BJ (cell line): ENCODE measurements at regions of chr9 and their contacts with region 1.

Region 1: DNA sequence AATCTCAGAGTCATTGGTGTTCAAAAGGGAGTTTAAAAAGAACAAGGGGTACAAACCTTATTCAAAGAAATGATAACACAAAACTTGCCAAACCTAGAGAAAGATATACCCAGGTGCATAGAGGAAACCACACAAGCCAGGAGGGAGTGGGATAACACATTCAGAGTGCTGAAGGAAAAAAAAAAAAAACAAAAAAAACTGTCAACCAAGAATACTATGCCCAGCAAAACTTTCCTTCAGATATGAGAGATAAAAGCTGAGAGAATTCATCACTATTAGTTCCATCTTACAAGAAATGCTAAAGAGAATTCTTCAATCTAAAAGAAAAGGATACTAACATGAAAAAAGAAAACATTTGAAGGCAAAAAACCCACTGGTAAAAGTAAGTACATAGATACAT is 11.5 kb upstream of the TESK1 start:
- DNase-seq: no peak
- H3K4me3 ChIP-seq: no peak overlapping the region
- H3K27me3 ChIP-seq: no peaks in the 10 kb centered on the region
- CTCF ChIP-seq: no peak

Region 2: DNA sequence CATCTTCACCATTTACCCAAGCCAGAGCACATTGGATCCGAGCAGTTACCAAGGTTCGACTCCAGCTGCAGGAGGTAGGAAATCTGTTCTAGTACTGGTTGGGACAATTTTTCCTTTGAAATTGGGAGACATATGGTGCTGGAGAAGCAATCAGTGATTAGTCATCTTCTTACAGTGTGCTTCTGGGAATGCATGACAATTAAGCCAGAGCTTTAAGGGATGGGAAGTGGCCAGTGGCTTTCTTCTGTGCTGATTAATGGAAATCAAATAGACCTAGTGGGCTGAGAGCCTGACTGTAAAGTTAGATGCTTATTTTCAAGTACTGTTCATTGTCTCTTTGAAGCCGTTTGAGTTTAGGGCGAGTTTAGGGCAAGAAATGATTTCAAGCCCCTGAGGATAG is 279.7 kb before region 1 on chr9:
- CTCF ChIA-PET with region 1: no interaction called
- POLR2A ChIA-PET with region 1: no interaction called
- DNase-seq: no peak
- H3K4me3 ChIP-seq: no peak overlapping the region
- H3K27me3 ChIP-seq: no peaks in the 10 kb centered on the region
- CTCF ChIP-seq: no peak

Region 3: DNA sequence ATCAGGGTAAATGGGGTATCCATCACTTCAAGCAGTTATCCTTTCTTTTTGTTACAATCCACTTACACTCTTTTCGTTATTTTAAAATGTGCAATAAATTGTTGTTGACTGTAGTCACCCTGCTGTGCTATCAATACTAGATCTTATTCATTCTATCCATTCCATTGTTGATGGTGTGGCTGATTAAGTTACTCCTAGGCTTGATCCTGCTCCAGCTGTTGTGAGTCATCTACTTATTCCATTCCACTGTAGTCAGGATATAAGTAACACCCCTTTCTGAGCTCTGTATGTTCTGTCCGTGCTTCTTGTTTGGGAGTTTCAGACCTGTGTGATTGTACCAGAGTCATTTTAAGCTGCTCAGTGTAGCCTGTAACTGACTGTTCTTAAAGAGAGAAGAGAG is 226.1 kb before region 1 on chr9:
- CTCF ChIA-PET with region 1: no interaction called
- POLR2A ChIA-PET with region 1: no interaction called
- DNase-seq: peak; percentile 92
- H3K4me3 ChIP-seq: no peak overlapping the region
- H3K27me3 ChIP-seq: no peaks in the 10 kb centered on the region
- CTCF ChIP-seq: no peak

Region 4: GRCh38 chr9:35538361-35539234 is 55.0 kb before region 1 on chr9:
- CTCF ChIA-PET with region 1: no interaction called
- POLR2A ChIA-PET with region 1: interaction called, 19 read pairs
- DNase-seq: peak; percentile 73
- H3K4me3 ChIP-seq: peak overlapping the region; percentile 52
- H3K27me3 ChIP-seq: no peaks in the 10 kb centered on the region
- CTCF ChIP-seq: no peak